ENCODE measurements at regions of chr22 and their contacts with region 1.

Region 1: GRCh38 chr22:32695451-32695891 is 106.0 kb upstream of the TIMP3 start:
- DNase-seq: no peak
- ATAC-seq: no peak
- H3K4me3 ChIP-seq: no peak overlapping the region
- H3K27ac ChIP-seq: no peak overlapping the region
- H3K4me1 ChIP-seq: peaks cover 0 to 19% (median 13%) of the 10 kb centered on the region in 9 donors
- H3K27me3 ChIP-seq: peaks cover 0 to 2% (median 0%) of the 10 kb centered on the region in 7 donors
- CTCF ChIP-seq: no peak

Region 2: DNA sequence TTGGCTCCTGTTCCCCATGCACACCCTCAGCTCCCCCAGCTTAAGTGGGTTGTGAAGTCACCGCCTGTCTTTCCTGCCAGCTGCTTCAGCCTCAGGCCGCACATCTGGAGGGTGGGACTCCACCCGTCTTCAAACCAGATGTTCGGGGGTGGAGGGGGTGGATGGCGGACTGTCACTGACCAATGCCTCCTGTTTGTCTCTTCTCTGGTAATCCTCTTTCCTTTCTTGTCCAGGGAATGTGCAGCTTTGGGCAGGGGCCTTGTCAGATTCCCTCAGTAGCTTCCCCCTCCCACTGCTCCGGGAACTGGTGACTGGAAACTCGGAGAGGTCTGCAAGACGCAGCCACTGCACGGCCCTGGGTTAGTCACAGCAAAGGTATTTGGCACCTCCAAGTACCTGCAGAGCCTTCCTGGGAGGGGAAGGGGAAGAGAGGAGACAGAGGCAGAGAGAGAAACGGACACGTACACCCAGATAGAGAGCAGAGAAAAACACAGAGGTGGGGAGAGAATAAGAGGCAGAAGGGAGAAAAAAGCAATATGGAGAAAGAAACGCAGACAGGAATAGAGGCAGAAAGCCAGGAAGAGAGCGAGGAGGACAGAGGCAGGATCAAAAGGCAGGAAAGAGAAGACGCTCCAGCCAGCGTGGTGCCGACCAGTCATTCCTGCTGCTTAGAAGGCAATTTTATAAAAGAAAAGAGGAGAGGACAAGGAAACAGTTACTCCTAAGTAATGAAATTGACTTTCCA is 50.0 kb after region 1 on chr22:
- intact Hi-C with region 1: loop called in 1 of 10 experiments (anchors 5 kb)
- DNase-seq: peak; percentile 48 to 50
- ATAC-seq: peak; percentile 72 to 87 (median 78)
- H3K4me3 ChIP-seq: peak overlapping the region in 2 of 10 donors; percentile 0 to 3
- H3K27ac ChIP-seq: peak overlapping the region in 8 of 10 donors; percentile 3 to 79 (median 44)
- H3K4me1 ChIP-seq: peaks cover 3 to 31% (median 27%) of the 10 kb centered on the region in 9 donors
- H3K27me3 ChIP-seq: no peaks in the 10 kb centered on the region
- CTCF ChIP-seq: no peak

Measured in heart right ventricle (tissue), 16 donors.